ENCODE measurements at regions of chr7 and their contacts with region 1.

Region 1: GRCh38 chr7:82481499-82482097 is 38.0 kb upstream of the CACNA2D1 start:
- DNase-seq: no peak
- ATAC-seq: no peak
- H3K4me3 ChIP-seq: no peak overlapping the region
- H3K27ac ChIP-seq: no peak overlapping the region
- H3K4me1 ChIP-seq: peaks cover 0 to 6% (median 0%) of the 10 kb centered on the region in 9 donors
- H3K27me3 ChIP-seq: no peaks in the 10 kb centered on the region
- CTCF ChIP-seq: peak; percentile 38 to 82 (median 74)

Region 2: GRCh38 chr7:82234457-82235049 is 247.0 kb before region 1 on chr7:
- intact Hi-C with region 1: loop called in 7 of 10 experiments (anchors 2 to 10 kb)
- DNase-seq: no peak
- ATAC-seq: peak in 2 of 8 donors; percentile 24 to 38
- H3K4me3 ChIP-seq: no peak overlapping the region
- H3K27ac ChIP-seq: peak overlapping the region in 1 of 10 donors; percentile 28
- H3K4me1 ChIP-seq: peaks cover 0 to 30% (median 11%) of the 10 kb centered on the region in 9 donors
- H3K27me3 ChIP-seq: no peaks in the 10 kb centered on the region
- CTCF ChIP-seq: peak; percentile 46 to 74 (median 55)

Region 3: DNA sequence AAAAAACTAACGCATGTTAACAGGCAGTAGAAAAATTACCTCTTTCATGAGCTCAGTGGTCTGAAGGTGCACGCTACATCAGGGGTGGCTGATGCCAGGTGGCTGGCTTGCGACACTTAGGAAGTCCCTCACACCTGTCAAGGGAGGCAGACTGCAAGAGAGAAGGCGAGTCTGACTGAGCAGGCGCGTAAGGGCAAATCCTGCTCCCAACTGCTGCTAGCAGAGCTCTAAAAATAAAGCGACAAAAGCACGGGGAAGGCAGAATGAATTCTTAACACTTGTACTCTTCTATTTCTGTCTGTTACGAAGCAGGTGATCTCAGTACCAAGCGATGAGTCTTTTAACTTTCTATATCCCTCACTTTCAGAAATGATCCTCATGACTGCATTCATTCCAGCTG is 71.1 kb before region 1 on chr7:
- intact Hi-C with region 1: loop called in 1 of 10 experiments (anchors 10 kb)
- DNase-seq: peak; percentile 37 to 65
- ATAC-seq: peak; percentile 86 to 96 (median 92)
- H3K4me3 ChIP-seq: peak overlapping the region in 8 of 10 donors; percentile 10 to 48 (median 29)
- H3K27ac ChIP-seq: peak overlapping the region; percentile 6 to 87 (median 76)
- H3K4me1 ChIP-seq: peaks cover 0 to 41% (median 12%) of the 10 kb centered on the region in 9 donors
- H3K27me3 ChIP-seq: no peaks in the 10 kb centered on the region
- CTCF ChIP-seq: no peak

Region 4: DNA sequence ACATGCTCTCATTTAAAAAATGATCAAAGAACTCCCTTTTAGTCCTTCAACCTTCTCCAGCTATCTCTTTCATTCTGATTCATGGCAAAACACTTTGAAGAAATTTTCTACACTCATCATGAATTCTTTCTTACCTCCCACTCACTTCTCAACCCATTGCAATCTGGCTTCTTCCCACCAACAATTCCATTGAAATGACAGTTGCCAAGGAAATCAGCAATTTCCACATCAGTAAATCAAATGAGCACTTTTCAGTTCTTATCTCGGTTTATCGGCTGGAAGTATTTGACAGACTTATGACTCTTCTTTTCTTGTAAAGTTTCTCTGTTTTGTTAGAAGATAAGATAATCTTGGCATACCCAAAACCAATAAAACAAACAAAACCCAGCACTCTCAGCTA is 61.1 kb after region 1 on chr7:
- intact Hi-C with region 1: no loop called
- DNase-seq: no peak
- ATAC-seq: no peak
- H3K4me3 ChIP-seq: no peak overlapping the region
- H3K27ac ChIP-seq: no peak overlapping the region
- H3K4me1 ChIP-seq: no peaks in the 10 kb centered on the region
- H3K27me3 ChIP-seq: no peaks in the 10 kb centered on the region
- CTCF ChIP-seq: no peak